HCT116 (cell line): ENCODE measurements at regions of chr11 and their contacts with region 1.

Region 1: GRCh38 chr11:33161120-33162005 is at the start of gene CSTF3:
- DNase-seq: peak; percentile 97
- ATAC-seq: peak; percentile 97
- H3K4me3 ChIP-seq: peak within 1 kb of the TSS; percentile 70 to 85
- H3K27ac ChIP-seq: peak within 1 kb of the TSS; percentile 76
- H3K4me1 ChIP-seq: peaks cover 6 to 27% of the 10 kb centered on the region in 2 experiments; a peak in 3 of 4 replicates
- H3K27me3 ChIP-seq: no peaks in the 10 kb centered on the region
- CTCF ChIP-seq: peak in 2 of 3 experiments; percentile 11 to 20; a peak in 1 of 6 replicates
- POLR2A ChIP-seq: peak; percentile 45
- RAD21 ChIP-seq: no peak
- total RNA-seq, gene CSTF3: 39.3 TPM

Region 2: GRCh38 chr11:33257897-33258630 is 96.7 kb after region 1 on chr11:
- CTCF ChIA-PET with region 1: no interaction called
- POLR2A ChIA-PET with region 1: no interaction called
- RAD21 ChIA-PET with region 1: no interaction called
- intact Hi-C with region 1: loop called (anchors 5 kb)
- DNase-seq: peak; percentile 58
- ATAC-seq: peak; percentile 53
- H3K4me3 ChIP-seq: peak overlapping the region; percentile 83 to 92
- H3K27ac ChIP-seq: peak overlapping the region; percentile 99
- H3K4me1 ChIP-seq: peaks cover 16 to 31% of the 10 kb centered on the region in 2 experiments; a peak in 3 of 4 replicates
- H3K27me3 ChIP-seq: no peaks in the 10 kb centered on the region
- CTCF ChIP-seq: peak in 2 of 3 experiments; percentile 11 to 27; a peak in 1 of 6 replicates
- POLR2A ChIP-seq: peak; percentile 66
- RAD21 ChIP-seq: no peak

Region 3: DNA sequence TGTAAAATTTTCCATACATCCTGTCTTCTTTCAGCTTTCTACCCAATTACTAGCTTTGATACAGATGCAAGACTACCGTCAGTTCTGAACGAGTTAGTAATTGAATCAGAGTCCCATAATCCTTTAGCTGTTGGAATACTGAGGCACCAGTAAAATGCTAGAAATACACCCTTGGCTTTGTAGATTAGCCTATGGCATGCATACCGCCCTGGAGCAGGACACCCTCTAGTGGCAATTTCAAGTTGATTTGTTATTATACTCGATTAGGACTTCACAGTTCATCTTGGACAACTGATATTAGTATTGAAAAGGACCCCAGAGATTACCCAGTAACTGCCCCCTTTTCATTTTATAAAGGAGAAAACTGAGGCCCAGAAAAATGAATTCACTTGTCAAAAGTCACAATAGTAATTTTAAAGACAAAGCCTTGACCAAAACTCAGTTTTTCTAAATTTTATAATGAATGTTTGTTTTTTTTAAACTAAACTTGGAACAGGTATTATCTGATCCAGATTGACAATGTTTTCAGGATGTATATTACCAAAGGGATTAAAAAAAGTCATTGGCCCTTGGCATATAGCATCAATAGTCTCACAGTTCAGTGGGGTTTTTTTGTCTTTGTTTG is 168.5 kb after region 1 on chr11:
- CTCF ChIA-PET with region 1: interaction called, 18 read pairs
- POLR2A ChIA-PET with region 1: no interaction called
- RAD21 ChIA-PET with region 1: interaction called in 1 of 2 experiments, 3 read pairs
- intact Hi-C with region 1: loop called (anchors 1 kb)
- DNase-seq: peak; percentile 48
- ATAC-seq: peak; percentile 90
- H3K4me3 ChIP-seq: no peak overlapping the region
- H3K27ac ChIP-seq: no peak overlapping the region
- H3K4me1 ChIP-seq: 0 out of 4 replicates have a peak, but pooled peaks cover 0 to 2% of the 10 kb centered on the region in 2 experiments
- H3K27me3 ChIP-seq: no peaks in the 10 kb centered on the region
- CTCF ChIP-seq: peak; percentile 60 to 77 (median 62); a peak in 5 of 6 replicates
- POLR2A ChIP-seq: no peak
- RAD21 ChIP-seq: peak; percentile 80

Region 4: GRCh38 chr11:33557201-33557600 is 395.8 kb after region 1 on chr11:
- CTCF ChIA-PET with region 1: no interaction called
- POLR2A ChIA-PET with region 1: no interaction called
- RAD21 ChIA-PET with region 1: no interaction called
- intact Hi-C with region 1: no loop called
- DNase-seq: no peak
- ATAC-seq: peak; percentile 84
- H3K4me3 ChIP-seq: peak overlapping the region in 1 of 2 experiments; percentile 28; a peak in 2 of 4 replicates
- H3K27ac ChIP-seq: no peak overlapping the region
- H3K4me1 ChIP-seq: peaks cover 0 to 30% of the 10 kb centered on the region in 2 experiments; a peak in 3 of 4 replicates
- H3K27me3 ChIP-seq: no peaks in the 10 kb centered on the region
- CTCF ChIP-seq: no peak
- POLR2A ChIP-seq: no peak
- RAD21 ChIP-seq: no peak